HEK293 (cell line): ENCODE measurements at regions of chr3 and their contacts with region 1.

Region 1: GRCh38 chr3:189304446-189305351 is 132.9 kb downstream of the TPRG1 start:
- H3K4me3 ChIP-seq: no peak overlapping the region; the same call in none of the 2 replicates
- H3K27ac ChIP-seq: peak overlapping the region; percentile 56
- H3K4me1 ChIP-seq: peaks cover 12% of the 10 kb centered on the region
- CTCF ChIP-seq: no peak

Region 2: GRCh38 chr3:189262746-189263145 is 42.0 kb before region 1 on chr3:
- CTCF ChIA-PET with region 1: no interaction called
- POLR2A ChIA-PET with region 1: no interaction called
- H3K4me3 ChIP-seq: no peak overlapping the region
- H3K27ac ChIP-seq: no peak overlapping the region
- H3K4me1 ChIP-seq: no peaks in the 10 kb centered on the region
- CTCF ChIP-seq: no peak

Region 3: GRCh38 chr3:189324538-189325138 is 19.9 kb after region 1 on chr3:
- CTCF ChIA-PET with region 1: interaction called, 3 read pairs
- POLR2A ChIA-PET with region 1: interaction called, 18 read pairs
- H3K4me3 ChIP-seq: no peak overlapping the region
- H3K27ac ChIP-seq: peak overlapping the region; percentile 63
- H3K4me1 ChIP-seq: peaks cover 16% of the 10 kb centered on the region
- CTCF ChIP-seq: no peak

Region 4: DNA sequence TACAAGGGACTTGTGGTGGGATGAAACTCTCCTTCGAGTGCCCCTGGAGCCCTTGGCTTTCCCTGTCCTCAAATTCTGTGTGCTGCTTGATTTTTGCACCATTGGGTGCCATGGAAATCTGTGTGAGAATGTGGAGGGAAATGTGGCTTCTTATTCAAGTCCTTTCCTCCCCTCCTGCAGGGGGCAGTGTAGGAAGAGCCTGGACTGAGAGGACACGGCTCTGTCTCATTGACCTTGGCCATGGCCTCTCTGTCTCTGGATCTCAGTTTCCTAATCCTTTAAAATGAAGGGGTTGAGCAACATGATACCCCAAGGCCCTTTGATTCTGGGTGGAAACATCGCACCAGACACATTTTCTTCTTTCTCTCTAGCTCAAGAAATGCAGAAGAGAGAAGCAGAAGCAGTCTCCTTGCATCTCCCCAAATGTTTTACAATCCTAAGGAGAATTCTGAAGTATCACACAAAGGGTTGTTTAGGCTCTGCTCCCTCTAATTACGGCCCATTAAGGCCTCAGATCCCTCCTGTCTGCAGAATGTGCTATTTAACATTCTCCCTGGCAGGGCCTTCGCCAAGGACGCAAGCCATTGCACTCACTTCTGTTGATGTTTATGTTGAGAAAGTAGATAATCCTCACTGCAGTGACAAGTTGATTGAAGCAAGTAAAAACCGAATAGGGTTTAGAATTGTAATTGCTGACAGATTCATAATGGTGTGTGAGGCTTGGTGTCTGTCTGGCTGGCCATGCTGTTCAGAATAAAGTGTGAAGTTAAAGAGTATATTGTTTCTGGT is 36.2 kb after region 1 on chr3:
- CTCF ChIA-PET with region 1: no interaction called
- POLR2A ChIA-PET with region 1: no interaction called
- H3K4me3 ChIP-seq: no peak overlapping the region
- H3K27ac ChIP-seq: peak overlapping the region; percentile 12; the same call in 1 of the 2 replicates
- H3K4me1 ChIP-seq: peaks cover 4% of the 10 kb centered on the region
- CTCF ChIP-seq: no peak